PC-3 (cell line): ENCODE measurements at regions of chrX and their contacts with region 1.

Region 1: GRCh38 chrX:57741107-57741506 is 61.0 kb upstream of the NLRP2B start:
- DNase-seq: no peak
- ATAC-seq: no peak
- H3K4me3 ChIP-seq: no peak overlapping the region
- H3K27ac ChIP-seq: no peak overlapping the region
- H3K4me1 ChIP-seq: no peaks in the 10 kb centered on the region
- H3K27me3 ChIP-seq: no peaks in the 10 kb centered on the region
- CTCF ChIP-seq: no peak

Region 2: DNA sequence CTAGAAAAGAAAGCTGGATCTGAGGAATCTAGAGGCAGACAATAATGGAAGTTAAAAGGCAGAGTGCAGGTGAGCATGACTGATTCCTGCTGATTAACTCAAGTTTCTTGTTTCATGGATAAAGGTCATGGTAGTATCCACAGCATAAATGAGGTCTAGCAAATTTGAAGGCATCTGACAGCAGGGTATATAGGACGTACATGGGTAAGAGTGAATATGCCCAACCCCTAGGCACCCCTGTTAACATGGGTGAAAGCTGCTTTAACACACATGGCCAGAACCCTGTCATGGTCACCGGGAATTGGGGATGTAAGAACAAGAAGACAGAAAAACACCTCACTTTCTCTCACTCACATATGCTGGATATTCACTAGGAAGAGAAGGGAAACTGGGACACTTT is 86.0 kb before region 1 on chrX:
- CTCF ChIA-PET with region 1: no interaction called
- POLR2A ChIA-PET with region 1: no interaction called
- intact Hi-C with region 1: no loop called
- DNase-seq: no peak
- ATAC-seq: no peak
- H3K4me3 ChIP-seq: no peak overlapping the region
- H3K27ac ChIP-seq: no peak overlapping the region
- H3K4me1 ChIP-seq: no peaks in the 10 kb centered on the region
- H3K27me3 ChIP-seq: no peaks in the 10 kb centered on the region
- CTCF ChIP-seq: no peak

Region 3: GRCh38 chrX:57772637-57773036 is 31.5 kb after region 1 on chrX:
- CTCF ChIA-PET with region 1: no interaction called
- POLR2A ChIA-PET with region 1: no interaction called
- intact Hi-C with region 1: loop called (anchors 5 kb)
- DNase-seq: peak; percentile 4
- ATAC-seq: no peak
- H3K4me3 ChIP-seq: no peak overlapping the region
- H3K27ac ChIP-seq: no peak overlapping the region
- H3K4me1 ChIP-seq: peaks cover 8% of the 10 kb centered on the region
- H3K27me3 ChIP-seq: no peaks in the 10 kb centered on the region
- CTCF ChIP-seq: peak; percentile 30; the same call in 1 of the 2 replicates